ENCODE measurements at regions of chr11 and their contacts with region 1.

Region 1: DNA sequence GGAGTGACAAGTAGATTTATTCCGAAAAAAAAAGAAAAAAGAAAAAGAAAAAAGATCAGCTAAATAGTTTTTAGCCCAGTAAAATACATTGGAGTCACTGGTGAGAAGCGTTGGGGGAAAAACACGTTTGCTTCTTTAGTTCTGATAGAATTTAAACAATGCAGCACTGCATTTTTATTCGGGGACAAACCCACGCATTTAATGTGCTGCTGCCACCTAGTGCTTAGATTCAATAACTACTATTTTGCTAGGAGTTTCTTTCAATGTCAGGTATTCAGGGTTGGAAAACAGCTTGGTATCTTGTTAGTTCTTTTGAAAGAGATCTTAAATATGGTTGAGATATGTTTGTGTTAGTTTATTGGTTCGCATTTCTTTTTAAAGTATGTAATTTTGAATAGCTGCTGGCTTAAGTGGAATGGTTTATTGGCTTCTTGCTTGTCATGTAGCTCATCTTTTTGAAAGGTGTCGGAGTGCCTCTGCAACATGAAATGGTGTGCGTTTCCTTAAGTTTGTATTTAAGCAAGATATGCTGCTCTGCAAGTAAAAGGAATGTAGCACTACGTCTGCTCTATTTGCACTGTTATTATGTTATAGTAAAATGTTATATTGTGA is 41.9 kb downstream of the SVIP start:
- DNase-seq: no peak
- H3K4me3 Mint-ChIP-seq: no peak overlapping the region
- H3K27ac Mint-ChIP-seq: no peak overlapping the region
- H3K4me1 Mint-ChIP-seq: no peaks in the 10 kb centered on the region
- H3K27me3 Mint-ChIP-seq: peaks cover 2% of the 10 kb centered on the region

Region 2: DNA sequence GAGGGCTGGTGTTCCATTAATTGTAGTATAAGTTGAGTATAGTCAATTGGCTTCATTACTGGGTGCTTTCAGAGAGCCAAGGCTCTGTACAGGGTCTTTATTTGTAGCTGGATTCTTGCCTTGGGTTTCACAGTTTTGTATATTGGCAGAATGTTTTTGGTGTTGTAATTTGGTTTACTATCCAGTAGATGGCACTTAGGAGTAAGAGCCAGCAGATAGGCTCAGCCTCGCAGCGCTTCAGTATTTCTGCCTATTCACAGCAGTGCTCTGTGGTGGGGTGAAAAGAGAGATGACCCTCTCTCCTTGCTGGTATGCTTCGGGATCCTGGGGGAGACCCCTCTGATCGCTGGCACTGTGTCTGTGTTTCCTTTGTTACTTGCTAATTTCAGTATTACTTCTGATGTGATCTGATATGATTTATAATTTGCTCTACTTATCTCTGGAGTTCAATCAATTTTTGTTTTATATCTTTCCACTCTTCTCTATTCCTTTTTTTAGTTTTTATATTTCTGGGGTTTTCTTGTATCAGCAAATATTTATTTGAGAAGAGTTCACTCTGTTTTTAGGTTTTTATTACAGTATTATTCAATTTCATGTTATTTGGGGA is 542.6 kb before region 1 on chr11:
- intact Hi-C with region 1: loop called (anchors 5 kb)
- DNase-seq: no peak
- H3K4me3 Mint-ChIP-seq: no peak overlapping the region
- H3K27ac Mint-ChIP-seq: no peak overlapping the region
- H3K4me1 Mint-ChIP-seq: no peaks in the 10 kb centered on the region
- H3K27me3 Mint-ChIP-seq: peaks cover 5% of the 10 kb centered on the region

Region 3: GRCh38 chr11:22337596-22338485 is 449.8 kb before region 1 on chr11 and contains the start of gene SLC17A6:
- intact Hi-C with region 1: loop called (anchors 1 kb)
- DNase-seq: no peak
- H3K4me3 Mint-ChIP-seq: no peak within 1 kb of the TSS
- H3K27ac Mint-ChIP-seq: no peak within 1 kb of the TSS
- H3K4me1 Mint-ChIP-seq: peaks cover 8% of the 10 kb centered on the region
- H3K27me3 Mint-ChIP-seq: peaks cover 54% of the 10 kb centered on the region
- total RNA-seq, gene SLC17A6: not detected in 2 replicates

Region 4: DNA sequence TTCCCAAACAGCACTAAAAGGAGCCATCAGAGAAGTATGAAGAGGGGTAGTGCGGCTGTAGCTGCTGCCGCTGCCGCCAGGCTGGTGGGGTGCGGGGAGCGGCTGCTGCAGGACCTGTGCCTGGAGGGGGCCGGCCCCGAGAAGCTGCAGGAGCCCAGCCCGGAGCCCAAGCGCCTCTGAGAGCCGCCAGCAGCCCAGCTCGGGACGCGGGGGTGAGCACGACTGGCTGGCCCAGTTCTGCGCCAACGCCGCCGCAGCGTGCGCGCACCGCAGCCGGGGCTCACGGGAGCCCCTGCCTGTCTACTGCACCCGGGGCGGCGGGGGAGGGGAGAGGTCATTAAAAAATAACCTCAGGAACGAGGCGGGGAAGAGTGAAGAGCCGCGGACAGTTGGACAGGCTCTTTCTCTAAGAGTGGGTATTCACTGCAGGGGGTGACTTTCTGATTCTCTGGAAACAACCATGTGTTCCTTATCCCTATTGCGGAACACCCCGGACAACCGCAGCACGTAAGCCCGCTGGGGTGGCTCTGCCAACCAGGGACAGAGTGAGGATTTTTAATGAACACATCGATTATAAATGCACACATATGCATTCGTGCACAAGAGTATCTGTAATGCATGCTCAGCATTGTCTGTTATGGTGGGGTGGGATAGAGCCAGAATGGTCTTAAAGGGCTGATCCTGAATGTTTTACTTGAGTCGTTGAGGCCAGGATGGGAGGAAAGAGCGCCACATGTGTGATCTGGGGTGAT is 120.8 kb before region 1 on chr11:
- intact Hi-C with region 1: loop called (anchors 2 kb)
- DNase-seq: no peak
- H3K4me3 Mint-ChIP-seq: peak overlapping the region; percentile 81
- H3K27ac Mint-ChIP-seq: no peak overlapping the region
- H3K4me1 Mint-ChIP-seq: peaks cover 22% of the 10 kb centered on the region
- H3K27me3 Mint-ChIP-seq: peaks cover 55% of the 10 kb centered on the region

Region 5: GRCh38 chr11:22846726-22847125 is 59.1 kb after region 1 on chr11:
- intact Hi-C with region 1: no loop called
- DNase-seq: no peak
- H3K4me3 Mint-ChIP-seq: no peak overlapping the region
- H3K27ac Mint-ChIP-seq: no peak overlapping the region
- H3K4me1 Mint-ChIP-seq: peaks cover 1% of the 10 kb centered on the region
- H3K27me3 Mint-ChIP-seq: no peaks in the 10 kb centered on the region

Measured in activated T-helper 2 cell treated with anti-CD3 and anti-CD28 coated beads, Interferon-gamma antibody, Interleukin-2, Interleukin-4, amounts not matched to agents 10 μg/mL and 5 μg/mL and 100 μg/mL, durations not matched to agents 14 hours and 24 hours and 36 hours (primary cell).